Endothelial cell of umbilical vein (primary cell): ENCODE measurements at regions of chr17 and their contacts with region 1.

Region 1: DNA sequence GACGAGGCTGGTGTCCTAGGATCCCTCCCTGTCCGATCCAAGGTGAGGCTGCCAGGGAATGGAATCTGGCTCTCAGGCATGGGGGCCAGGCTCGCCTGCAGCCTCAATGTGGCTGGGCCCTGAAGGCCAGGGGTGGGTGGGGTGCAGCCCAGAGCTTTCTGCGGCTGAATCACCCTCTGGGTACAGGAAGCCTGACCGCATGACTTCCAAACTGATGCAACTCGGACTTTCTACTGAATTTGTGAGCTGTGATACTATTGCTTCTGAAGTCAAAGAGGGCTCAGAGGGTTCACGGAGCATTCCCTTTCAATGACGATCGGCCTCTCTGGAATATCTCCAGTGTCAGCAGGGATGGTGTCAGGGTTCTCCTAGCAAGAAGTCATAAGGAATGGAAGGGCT is 123.7 kb downstream of the METRNL start:
- DNase-seq: peak; percentile 19
- H3K4me3 ChIP-seq: no peak overlapping the region
- H3K27ac ChIP-seq: no peak overlapping the region
- H3K4me1 ChIP-seq: no peaks in the 10 kb centered on the region
- H3K27me3 ChIP-seq: no peaks in the 10 kb centered on the region
- CTCF ChIP-seq: no peak
- POLR2A ChIP-seq: no peak

Region 2: GRCh38 chr17:83091269-83092147 is 111.6 kb before region 1 on chr17:
- CTCF ChIA-PET with region 1: no interaction called
- POLR2A ChIA-PET with region 1: no interaction called
- dilution Hi-C with region 1: no loop called
- intact Hi-C with region 1: no loop called
- DNase-seq: no peak
- H3K4me3 ChIP-seq: no peak overlapping the region
- H3K27ac ChIP-seq: no peak overlapping the region
- H3K4me1 ChIP-seq: no peaks in the 10 kb centered on the region
- H3K27me3 ChIP-seq: no peaks in the 10 kb centered on the region
- CTCF ChIP-seq: no peak
- POLR2A ChIP-seq: no peak

Region 3: GRCh38 chr17:83104552-83105485 is 98.3 kb before region 1 on chr17:
- CTCF ChIA-PET with region 1: interaction called, 14 read pairs
- POLR2A ChIA-PET with region 1: no interaction called
- dilution Hi-C with region 1: no loop called
- intact Hi-C with region 1: no loop called
- DNase-seq: peak; percentile 47
- H3K4me3 ChIP-seq: no peak overlapping the region
- H3K27ac ChIP-seq: no peak overlapping the region
- H3K4me1 ChIP-seq: peaks cover 15% of the 10 kb centered on the region
- H3K27me3 ChIP-seq: no peaks in the 10 kb centered on the region
- CTCF ChIP-seq: peak; percentile 6 to 34
- POLR2A ChIP-seq: no peak